Motor neuron (in vitro differentiated cells): ENCODE measurements at regions of chr17 and their contacts with region 1.

Region 1: GRCh38 chr17:81484195-81484979 is 28.2 kb downstream of the ACTG1 start:
- ATAC-seq: peak; percentile 40 to 75 (median 52)
- H3K4me3 ChIP-seq: peak overlapping the region; percentile 15 to 36 (median 25)
- H3K27ac ChIP-seq: peak overlapping the region in 1 of 2 donors; percentile 72
- H3K4me1 ChIP-seq: peaks cover 65 to 70% of the 10 kb centered on the region in 2 donors

Region 2: GRCh38 chr17:80656590-80656989 is 827.8 kb before region 1 on chr17:
- in situ Hi-C with region 1: no loop called
- ATAC-seq: peak in 6 of 8 experiments; percentile 56 to 99 (median 98)
- H3K4me3 ChIP-seq: no peak overlapping the region
- H3K27ac ChIP-seq: peak overlapping the region; percentile 3 to 4
- H3K4me1 ChIP-seq: peaks cover 12 to 14% of the 10 kb centered on the region in 2 donors

Region 3: GRCh38 chr17:80866147-80866793 is 618.1 kb before region 1 on chr17:
- in situ Hi-C with region 1: no loop called
- ATAC-seq: peak; percentile 71 to 91 (median 81)
- H3K4me3 ChIP-seq: no peak overlapping the region
- H3K27ac ChIP-seq: no peak overlapping the region
- H3K4me1 ChIP-seq: peaks cover 0 to 3% of the 10 kb centered on the region in 2 donors

Region 4: DNA sequence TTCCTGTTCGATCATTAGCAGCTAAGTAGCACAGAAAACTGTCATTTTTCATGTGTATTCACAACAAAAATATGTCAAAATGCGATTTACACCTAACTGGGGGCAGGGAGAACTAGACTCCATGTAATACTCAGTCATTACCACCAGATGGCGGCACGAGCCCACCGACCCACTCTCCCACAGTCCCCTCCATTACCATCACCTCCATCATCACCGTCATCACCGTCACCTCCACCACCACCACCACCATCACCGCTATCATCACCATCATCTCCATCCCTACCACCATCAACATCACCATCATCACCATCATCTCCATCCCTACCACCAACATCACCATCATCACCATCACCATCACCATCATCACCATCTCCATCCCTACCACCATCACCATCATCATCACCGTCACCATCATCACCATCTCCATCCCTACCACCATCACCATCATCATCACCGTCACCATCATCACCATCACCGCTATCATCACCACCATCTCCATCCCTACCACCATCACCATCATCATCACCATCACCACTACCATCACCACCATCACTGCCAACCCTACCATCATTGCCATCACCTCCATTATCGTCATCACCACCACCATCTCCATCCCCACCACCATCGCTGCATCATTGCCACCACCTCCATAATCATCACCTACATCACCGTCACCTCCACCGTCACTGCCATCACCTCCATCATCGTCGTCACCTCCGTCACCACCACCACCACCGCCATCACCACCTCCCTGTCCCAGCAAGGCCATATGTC is 230.8 kb before region 1 on chr17:
- in situ Hi-C with region 1: loop called in 3 of 9 experiments (anchors 10 to 25 kb)
- ATAC-seq: peak in 4 of 8 experiments; percentile 12 to 28 (median 14)
- H3K4me3 ChIP-seq: no peak overlapping the region
- H3K27ac ChIP-seq: peak overlapping the region; percentile 30 to 64
- H3K4me1 ChIP-seq: peaks cover 38 to 53% of the 10 kb centered on the region in 2 donors

Region 5: GRCh38 chr17:81294856-81295680 is 189.3 kb before region 1 on chr17 and contains the start of gene SLC38A10:
- in situ Hi-C with region 1: loop called in 3 of 9 experiments (anchors 25 kb)
- ATAC-seq: peak; percentile 85 to 97 (median 96)
- H3K4me3 ChIP-seq: peak within 1 kb of the TSS; percentile 61 to 79 (median 76)
- H3K27ac ChIP-seq: peak within 1 kb of the TSS; percentile 78 to 93
- H3K4me1 ChIP-seq: peaks cover 6 to 9% of the 10 kb centered on the region in 2 donors
- total RNA-seq, gene SLC38A10: 29.0 to 57.1 (median 49.1) TPM

Region 6: GRCh38 chr17:81394921-81395599 is 89.3 kb before region 1 on chr17 and contains the start of gene BAHCC1:
- in situ Hi-C with region 1: loop called in 3 of 9 experiments (anchors 25 kb)
- ATAC-seq: peak; percentile 69 to 87 (median 79)
- H3K4me3 ChIP-seq: peak within 1 kb of the TSS; percentile 54 to 62 (median 56)
- H3K27ac ChIP-seq: peak within 1 kb of the TSS; percentile 81 to 84
- H3K4me1 ChIP-seq: peaks cover 25 to 30% of the 10 kb centered on the region in 2 donors
- total RNA-seq, gene BAHCC1: 1.9 to 19.5 (median 10.4) TPM

Region 7: DNA sequence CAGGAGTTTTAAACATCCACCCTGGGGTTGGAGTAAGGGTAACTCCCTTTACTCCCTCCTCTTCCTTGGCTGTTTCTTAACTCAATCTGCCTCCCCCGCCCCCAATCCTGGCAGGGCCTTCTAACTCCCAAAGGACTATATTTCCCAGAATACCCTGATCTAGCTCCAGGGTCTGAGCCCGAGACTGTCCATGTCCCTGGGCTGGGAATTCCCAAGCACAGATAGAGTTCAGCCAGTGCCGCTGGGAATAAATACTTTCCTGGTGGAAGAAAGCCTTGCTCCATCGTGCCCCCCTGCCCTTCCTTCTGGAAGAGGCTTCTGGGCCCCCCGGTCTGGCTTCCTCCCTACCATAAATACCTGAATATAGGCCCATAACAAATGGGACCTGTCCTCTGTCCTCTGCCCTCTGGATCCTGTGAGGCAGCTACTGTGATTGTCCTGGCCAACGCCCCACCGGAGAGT is 78.9 kb before region 1 on chr17:
- in situ Hi-C with region 1: no loop called
- ATAC-seq: peak in 3 of 8 experiments; percentile 33 to 55 (median 43)
- H3K4me3 ChIP-seq: no peak overlapping the region
- H3K27ac ChIP-seq: peak overlapping the region in 1 of 2 donors; percentile 72
- H3K4me1 ChIP-seq: peaks cover 89 to 91% of the 10 kb centered on the region in 2 donors

Region 8: DNA sequence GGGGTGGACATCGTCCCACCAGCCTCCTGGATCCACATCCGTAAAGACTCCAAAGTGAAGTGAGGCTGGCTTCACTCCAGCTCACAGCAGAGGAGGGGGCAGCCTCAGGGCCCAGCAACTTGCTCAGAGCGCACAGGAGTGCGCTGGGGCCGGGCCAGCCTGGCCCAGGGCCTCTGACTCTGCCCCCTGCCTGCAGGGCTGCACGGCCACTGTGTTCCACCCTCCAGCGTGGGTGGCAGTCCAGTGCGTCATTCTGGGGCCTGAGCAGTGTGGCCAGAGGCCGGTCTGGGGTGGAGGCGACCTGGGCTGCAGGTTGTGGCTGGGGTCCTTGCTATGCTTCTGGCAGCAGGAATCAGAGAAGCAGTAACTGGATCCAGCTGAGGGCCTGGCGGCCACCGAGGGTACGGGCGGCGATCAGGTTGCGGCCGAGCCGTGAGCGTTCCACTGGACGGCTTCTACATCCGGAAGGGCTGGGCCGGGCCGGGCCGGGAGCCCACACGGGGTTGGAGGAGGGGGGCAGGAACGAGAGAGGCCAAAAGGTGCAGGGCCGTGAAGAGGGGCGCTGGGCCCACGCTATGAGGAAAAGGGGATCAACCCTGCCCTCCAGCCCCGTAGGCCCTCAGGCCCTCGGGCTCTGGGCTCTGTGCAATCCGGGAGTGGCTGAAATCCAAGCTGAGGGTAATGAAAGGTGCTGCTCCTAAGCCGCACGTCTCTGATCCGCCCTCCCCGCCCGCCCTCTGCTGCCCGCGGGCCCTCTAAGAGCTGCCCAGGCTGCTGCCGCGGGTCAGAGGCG is 43.4 kb after region 1 on chr17 and contains the start of gene FSCN2:
- in situ Hi-C with region 1: no loop called
- ATAC-seq: peak in 5 of 8 experiments; percentile 14 to 80 (median 61)
- H3K4me3 ChIP-seq: no peak within 1 kb of the TSS
- H3K27ac ChIP-seq: no peak within 1 kb of the TSS
- H3K4me1 ChIP-seq: peaks cover 10 to 11% of the 10 kb centered on the region in 2 donors
- total RNA-seq, gene FSCN2: 0.36 to 3.0 (median 1.2) TPM